ENCODE measurements at regions of chr11 and their contacts with region 1.

Region 1: GRCh38 chr11:121655537-121656327 is 203.0 kb upstream of the SORL1-AS1 start:
- DNase-seq: peak; percentile 92 to 94
- H3K4me3 ChIP-seq: peak overlapping the region; percentile 12
- H3K4me1 ChIP-seq: peaks cover 38% of the 10 kb centered on the region
- H3K27me3 ChIP-seq: no peaks in the 10 kb centered on the region

Region 2: GRCh38 chr11:122108192-122108799 is 452.6 kb after region 1 on chr11:
- in situ Hi-C with region 1: loop called (anchors 25 kb)
- DNase-seq: peak in 1 of 2 experiments; percentile 74
- H3K4me3 ChIP-seq: no peak overlapping the region
- H3K4me1 ChIP-seq: no peaks in the 10 kb centered on the region
- H3K27me3 ChIP-seq: peaks cover 16% of the 10 kb centered on the region

Region 3: GRCh38 chr11:122202951-122203456 is 547.3 kb after region 1 on chr11:
- in situ Hi-C with region 1: loop called (anchors 10 kb)
- DNase-seq: peak; percentile 40 to 72
- H3K4me3 ChIP-seq: no peak overlapping the region
- H3K4me1 ChIP-seq: no peaks in the 10 kb centered on the region
- H3K27me3 ChIP-seq: peaks cover 7% of the 10 kb centered on the region; the same call in 1 of the 2 replicates

Region 4: DNA sequence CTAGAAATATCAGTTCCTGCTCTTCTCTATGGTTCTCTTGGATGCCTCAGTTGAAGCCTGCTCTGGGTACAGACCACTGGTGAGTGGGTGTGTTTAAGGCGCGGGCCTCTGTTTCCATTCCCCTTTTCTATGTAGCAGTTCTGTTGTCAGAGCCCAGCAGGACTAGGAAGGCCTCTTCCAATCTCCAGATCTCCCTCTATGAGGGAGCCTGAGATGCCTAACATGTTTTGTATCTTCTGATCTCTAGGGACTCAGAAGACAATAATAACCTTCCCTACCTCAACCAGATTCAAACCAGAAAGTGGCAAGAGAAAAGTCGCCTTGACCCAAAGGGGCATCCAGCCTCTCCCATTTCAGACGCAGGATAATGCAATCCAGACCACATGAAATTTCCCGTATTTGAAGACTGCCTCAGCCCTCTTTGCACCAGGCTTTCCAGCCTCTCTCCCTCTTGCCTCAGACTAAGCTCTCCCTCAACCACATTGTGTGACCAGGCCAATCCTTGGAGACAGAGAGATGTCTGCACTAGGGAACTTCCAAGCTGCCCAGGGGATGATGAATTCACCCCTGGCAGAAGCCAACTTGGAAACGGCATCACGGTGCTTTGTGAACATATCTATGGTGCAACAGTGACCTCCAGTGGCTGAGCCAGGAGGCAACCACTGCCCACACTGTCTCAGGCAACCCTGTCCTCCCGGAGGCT is 849.7 kb after region 1 on chr11:
- in situ Hi-C with region 1: loop called (anchors 10 kb)
- DNase-seq: peak; percentile 51 to 74
- H3K4me3 ChIP-seq: no peak overlapping the region
- H3K4me1 ChIP-seq: no peaks in the 10 kb centered on the region
- H3K27me3 ChIP-seq: peaks cover 14% of the 10 kb centered on the region

Measured in HAP-1 (cell line).